PC-3 (cell line): ENCODE measurements at regions of chr2 and their contacts with region 1.

Region 1: DNA sequence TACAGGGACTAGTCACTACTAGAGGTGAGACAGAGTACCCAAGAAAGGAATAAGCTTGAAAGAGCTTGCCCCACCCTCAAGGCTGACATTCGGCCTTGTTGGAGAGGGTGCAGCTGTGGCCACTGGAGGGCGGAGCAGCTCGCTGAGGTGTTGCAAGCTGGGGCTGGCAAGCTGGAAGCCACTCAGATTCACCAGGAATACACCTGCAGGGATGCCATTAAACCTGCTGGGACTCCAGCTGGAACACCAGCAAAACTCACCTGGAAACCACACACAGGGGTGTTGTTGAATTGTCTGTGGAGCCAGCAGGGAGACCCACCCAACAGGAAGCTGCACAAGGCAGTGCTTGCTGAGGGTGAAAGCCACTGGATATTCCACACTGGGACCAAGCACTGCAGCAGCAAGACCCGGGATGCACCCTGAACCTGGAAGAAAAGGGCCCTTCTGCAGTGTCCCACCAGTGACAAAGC is 26.1 kb downstream of the KCTD18 start:
- DNase-seq: peak; percentile 85
- ATAC-seq: peak; percentile 64
- H3K4me3 ChIP-seq: no peak overlapping the region
- H3K27ac ChIP-seq: no peak overlapping the region
- H3K4me1 ChIP-seq: peaks cover 47% of the 10 kb centered on the region
- H3K27me3 ChIP-seq: no peaks in the 10 kb centered on the region
- CTCF ChIP-seq: peak; percentile 88

Region 2: GRCh38 chr2:199979832-199980628 is 503.7 kb before region 1 on chr2:
- CTCF ChIA-PET with region 1: interaction called, 5 read pairs
- POLR2A ChIA-PET with region 1: no interaction called
- intact Hi-C with region 1: loop called (anchors 1 kb)
- DNase-seq: peak; percentile 89
- ATAC-seq: peak; percentile 52
- H3K4me3 ChIP-seq: no peak overlapping the region
- H3K27ac ChIP-seq: no peak overlapping the region
- H3K4me1 ChIP-seq: peaks cover 26% of the 10 kb centered on the region
- H3K27me3 ChIP-seq: no peaks in the 10 kb centered on the region
- CTCF ChIP-seq: peak; percentile 96

Region 3: DNA sequence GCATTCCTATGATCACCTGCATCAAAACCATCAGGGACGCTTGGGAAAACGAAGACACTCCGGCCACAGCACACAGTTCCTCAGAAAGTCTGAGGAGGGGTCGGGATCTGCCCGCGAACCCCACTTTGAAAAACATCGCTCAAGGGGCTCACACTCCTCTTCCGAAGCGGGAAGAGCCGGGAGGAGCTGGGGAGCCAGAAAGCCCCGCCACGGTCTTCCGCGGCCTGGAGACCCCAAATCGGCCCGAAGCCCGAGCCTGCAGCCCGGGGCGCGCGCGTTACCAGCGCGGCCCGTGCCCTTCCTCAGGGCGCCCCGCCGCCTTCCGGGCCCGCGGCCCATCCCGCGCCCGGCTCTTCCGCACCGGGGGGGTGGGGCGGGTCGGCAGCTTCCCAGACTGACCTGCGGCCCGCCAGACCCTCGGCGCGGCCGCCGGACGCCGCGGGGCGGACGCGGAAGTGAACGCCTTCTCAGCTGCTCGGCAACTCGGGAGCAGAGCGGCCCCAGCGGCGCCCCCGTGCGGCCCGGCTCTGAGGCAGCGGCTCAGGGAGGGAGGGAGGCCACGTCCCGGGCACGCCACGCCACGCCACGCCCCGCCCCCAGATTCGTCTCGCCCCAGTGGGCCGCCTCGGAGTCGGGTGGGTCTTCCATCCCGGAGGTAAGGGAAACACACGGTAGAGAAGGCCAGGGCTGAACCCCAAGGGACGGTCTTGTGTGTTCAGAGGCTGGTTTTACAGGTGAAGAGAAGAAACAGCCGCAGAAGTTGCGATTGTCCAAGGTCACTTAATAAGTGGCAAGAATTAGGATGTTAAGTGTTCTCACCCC is 26.1 kb after region 1 on chr2 and contains the start of gene KCTD18:
- CTCF ChIA-PET with region 1: interaction called, 10 read pairs
- POLR2A ChIA-PET with region 1: no interaction called
- intact Hi-C with region 1: loop called (anchors 1 kb)
- DNase-seq: peak; percentile 89
- ATAC-seq: peak; percentile 92
- H3K4me3 ChIP-seq: peak within 1 kb of the TSS; percentile 92
- H3K27ac ChIP-seq: peak within 1 kb of the TSS; percentile 12; the same call in 1 of the 2 replicates
- H3K4me1 ChIP-seq: peaks cover 24% of the 10 kb centered on the region
- H3K27me3 ChIP-seq: no peaks in the 10 kb centered on the region
- CTCF ChIP-seq: peak; percentile 71
- total RNA-seq, gene KCTD18: 10.4 and 13.0 TPM in 2 replicates

Region 4: DNA sequence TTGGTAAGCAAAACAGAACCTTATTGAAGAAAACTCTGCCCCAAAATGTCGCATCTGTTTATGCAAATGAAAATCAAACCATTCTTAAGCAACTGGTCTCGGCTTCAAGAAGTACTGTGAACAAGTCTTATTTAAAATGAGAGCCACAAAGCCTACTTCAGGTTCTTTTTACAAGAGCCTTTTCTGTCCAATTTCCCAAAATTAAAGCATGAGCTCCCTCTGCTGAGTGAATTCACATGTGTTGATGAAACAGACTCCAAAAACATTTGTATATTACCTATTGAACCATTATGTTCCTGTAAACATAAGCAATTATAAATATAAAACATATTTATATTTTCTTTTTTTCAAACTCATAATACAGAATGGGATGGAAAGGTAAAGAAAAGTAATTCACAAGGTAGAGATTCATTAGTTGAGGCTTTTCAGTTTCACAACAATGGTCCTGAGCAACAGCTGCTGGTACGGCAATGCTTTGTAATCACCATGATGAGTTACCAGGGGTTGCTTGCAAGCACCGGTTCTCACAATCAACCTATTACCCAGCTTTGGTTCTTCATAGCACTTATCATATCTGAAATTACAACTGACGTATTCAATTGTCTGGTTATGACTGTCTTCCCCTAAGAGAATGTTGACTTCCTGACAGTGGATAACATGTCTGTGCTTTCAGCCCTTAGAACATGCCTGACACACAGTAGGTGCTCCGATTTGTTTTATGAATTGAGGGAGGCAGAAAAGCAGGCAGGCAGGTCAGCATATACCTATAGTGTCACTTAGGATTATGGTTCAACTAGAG is 219.6 kb after region 1 on chr2:
- CTCF ChIA-PET with region 1: interaction called, 6 read pairs
- POLR2A ChIA-PET with region 1: no interaction called
- intact Hi-C with region 1: loop called (anchors 1 kb)
- DNase-seq: peak; percentile 92
- ATAC-seq: peak; percentile 84
- H3K4me3 ChIP-seq: peak overlapping the region; percentile 33; the same call in 1 of the 2 replicates
- H3K27ac ChIP-seq: no peak overlapping the region
- H3K4me1 ChIP-seq: peaks cover 18% of the 10 kb centered on the region
- H3K27me3 ChIP-seq: no peaks in the 10 kb centered on the region
- CTCF ChIP-seq: peak; percentile 84

Region 5: GRCh38 chr2:200850512-200851256 is 366.9 kb after region 1 on chr2:
- CTCF ChIA-PET with region 1: interaction called, 12 read pairs
- POLR2A ChIA-PET with region 1: no interaction called
- intact Hi-C with region 1: no loop called
- DNase-seq: no peak
- ATAC-seq: no peak
- H3K4me3 ChIP-seq: no peak overlapping the region
- H3K27ac ChIP-seq: no peak overlapping the region
- H3K4me1 ChIP-seq: no peaks in the 10 kb centered on the region
- H3K27me3 ChIP-seq: no peaks in the 10 kb centered on the region
- CTCF ChIP-seq: no peak